Activated naive CD4-positive, alpha-beta T cell treated with anti-CD3 and anti-CD28 coated beads for 36 hours (primary cell): ENCODE measurements at regions of chr5 and their contacts with region 1.

Region 1: DNA sequence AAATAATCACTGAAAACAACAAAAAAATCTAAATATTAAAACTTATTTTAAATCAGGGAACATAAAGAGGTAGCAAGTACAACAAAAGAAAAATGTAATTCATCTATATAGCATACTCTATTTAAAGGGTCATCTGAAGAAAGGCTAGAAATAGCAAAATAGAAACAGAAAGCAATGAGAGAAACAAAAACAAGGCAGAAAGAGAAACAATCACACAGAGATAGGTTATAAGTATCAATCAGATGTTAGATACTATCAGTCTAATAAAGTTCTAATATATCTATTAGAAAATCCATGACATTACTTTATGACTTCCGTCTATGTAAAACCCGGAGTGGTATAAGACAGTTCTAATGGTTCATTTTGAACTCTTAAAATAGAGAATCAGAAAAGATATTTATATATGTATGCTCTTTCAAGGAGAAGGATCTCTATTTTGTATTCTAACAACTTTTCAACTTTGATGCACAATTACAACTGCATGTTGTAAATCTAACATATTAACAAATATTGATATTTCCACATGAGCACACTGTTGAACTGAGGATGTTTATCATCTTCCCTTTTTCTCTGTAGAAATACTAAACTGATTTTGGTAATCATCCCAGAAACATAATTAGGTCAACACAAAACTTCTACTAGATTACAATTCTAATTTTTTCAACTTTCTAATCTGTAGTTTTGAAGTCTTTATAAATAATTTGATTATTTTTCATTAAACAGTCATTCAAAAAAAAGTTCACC is 15.8 kb downstream of the RICTOR start:
- DNase-seq: no peak
- H3K4me3 Mint-ChIP-seq: no peak overlapping the region
- H3K27ac Mint-ChIP-seq: no peak overlapping the region
- H3K4me1 Mint-ChIP-seq: peaks cover 53% of the 10 kb centered on the region
- H3K27me3 Mint-ChIP-seq: no peaks in the 10 kb centered on the region

Region 2: DNA sequence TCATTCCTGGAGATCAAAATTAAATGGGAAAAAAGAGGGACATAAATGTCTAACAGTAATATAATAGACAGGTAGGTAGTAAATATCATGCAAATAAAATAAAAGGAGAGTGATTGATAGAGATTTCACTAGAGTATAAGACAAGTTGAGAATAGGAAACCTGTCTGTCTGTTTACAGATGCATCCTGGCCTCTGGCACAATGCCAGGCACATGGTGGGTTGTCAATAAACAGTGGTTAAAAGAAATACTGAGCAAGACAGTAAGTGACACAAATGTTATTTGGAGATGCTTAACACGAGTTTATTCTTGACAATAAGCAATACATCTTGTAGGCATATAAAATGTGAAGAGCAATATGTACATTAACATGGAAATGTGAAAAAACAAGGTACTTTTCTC is 17.5 kb before region 1 on chr5:
- CTCF ChIA-PET with region 1: no interaction called
- intact Hi-C with region 1: loop called (anchors 2 kb)
- DNase-seq: no peak
- H3K4me3 Mint-ChIP-seq: no peak overlapping the region
- H3K27ac Mint-ChIP-seq: no peak overlapping the region
- H3K4me1 Mint-ChIP-seq: peaks cover 32% of the 10 kb centered on the region
- H3K27me3 Mint-ChIP-seq: no peaks in the 10 kb centered on the region

Region 3: GRCh38 chr5:39513236-39513635 is 454.9 kb after region 1 on chr5:
- CTCF ChIA-PET with region 1: no interaction called
- intact Hi-C with region 1: no loop called
- DNase-seq: no peak
- H3K4me3 Mint-ChIP-seq: no peak overlapping the region
- H3K27ac Mint-ChIP-seq: no peak overlapping the region
- H3K4me1 Mint-ChIP-seq: no peaks in the 10 kb centered on the region
- H3K27me3 Mint-ChIP-seq: peaks cover 2% of the 10 kb centered on the region

Region 4: DNA sequence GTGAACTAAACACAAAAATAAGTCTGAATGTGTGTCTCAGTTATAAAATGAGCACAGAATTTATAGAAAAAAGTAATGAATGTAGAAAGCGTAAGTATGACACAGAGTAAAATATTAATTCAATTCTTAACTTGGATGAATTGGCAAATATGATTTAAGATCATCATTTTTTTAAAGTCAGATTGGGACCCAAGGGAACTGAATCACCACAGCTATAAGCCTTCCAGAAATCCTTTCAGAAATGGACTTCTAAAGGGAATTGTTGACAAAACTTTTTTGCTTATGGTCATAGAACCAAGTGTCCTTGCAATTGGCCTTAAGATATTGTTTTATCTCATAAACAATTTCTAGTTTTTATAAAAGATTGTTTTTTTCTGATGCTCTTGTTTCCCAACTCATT is 861.5 kb after region 1 on chr5:
- CTCF ChIA-PET with region 1: no interaction called
- intact Hi-C with region 1: no loop called
- DNase-seq: no peak
- H3K4me3 Mint-ChIP-seq: no peak overlapping the region
- H3K27ac Mint-ChIP-seq: no peak overlapping the region
- H3K4me1 Mint-ChIP-seq: no peaks in the 10 kb centered on the region
- H3K27me3 Mint-ChIP-seq: no peaks in the 10 kb centered on the region